Activated naive CD4-positive, alpha-beta T cell treated with anti-CD3 and anti-CD28 coated beads for 36 hours (primary cell): ENCODE measurements at regions of chr21 and their contacts with region 1.

Region 1: DNA sequence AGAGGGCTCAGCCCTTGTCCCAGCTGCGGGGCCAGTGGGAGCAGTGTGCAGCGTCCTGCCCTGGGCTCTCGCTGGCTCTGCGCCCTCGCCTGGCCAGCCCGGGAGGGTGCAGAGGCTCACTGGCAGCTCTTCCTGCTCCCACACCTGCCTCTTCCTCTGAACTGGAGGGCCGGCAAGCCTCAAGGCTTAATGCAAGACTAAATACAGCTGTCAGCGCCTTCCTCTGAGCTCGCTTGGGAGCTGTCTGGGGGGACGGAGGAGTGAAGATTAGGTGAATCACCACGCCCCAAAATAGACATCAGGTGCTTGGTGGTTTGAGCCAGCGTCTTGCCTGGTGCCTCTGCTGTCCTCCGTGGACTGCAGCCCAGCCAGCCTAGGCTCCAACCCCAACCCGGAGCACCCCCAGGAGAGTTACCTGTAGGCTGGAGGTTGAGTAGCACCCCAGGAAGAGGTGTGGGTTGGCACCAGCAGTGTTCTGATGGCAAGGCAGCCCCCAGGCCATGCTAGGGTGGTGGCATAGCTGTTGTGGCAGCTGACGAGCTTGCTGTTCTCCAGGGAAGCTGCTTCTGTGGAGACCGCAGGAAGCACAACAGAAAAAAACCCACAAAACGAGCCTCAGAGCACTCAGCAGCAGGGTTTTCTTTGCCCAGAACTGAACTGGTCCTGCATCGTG is 36.9 kb downstream of the UMODL1 start:
- DNase-seq: peak; percentile 71
- H3K4me3 Mint-ChIP-seq: peak overlapping the region; percentile 20
- H3K27ac Mint-ChIP-seq: no peak overlapping the region
- H3K4me1 Mint-ChIP-seq: peaks cover 5% of the 10 kb centered on the region
- H3K27me3 Mint-ChIP-seq: no peaks in the 10 kb centered on the region

Region 2: DNA sequence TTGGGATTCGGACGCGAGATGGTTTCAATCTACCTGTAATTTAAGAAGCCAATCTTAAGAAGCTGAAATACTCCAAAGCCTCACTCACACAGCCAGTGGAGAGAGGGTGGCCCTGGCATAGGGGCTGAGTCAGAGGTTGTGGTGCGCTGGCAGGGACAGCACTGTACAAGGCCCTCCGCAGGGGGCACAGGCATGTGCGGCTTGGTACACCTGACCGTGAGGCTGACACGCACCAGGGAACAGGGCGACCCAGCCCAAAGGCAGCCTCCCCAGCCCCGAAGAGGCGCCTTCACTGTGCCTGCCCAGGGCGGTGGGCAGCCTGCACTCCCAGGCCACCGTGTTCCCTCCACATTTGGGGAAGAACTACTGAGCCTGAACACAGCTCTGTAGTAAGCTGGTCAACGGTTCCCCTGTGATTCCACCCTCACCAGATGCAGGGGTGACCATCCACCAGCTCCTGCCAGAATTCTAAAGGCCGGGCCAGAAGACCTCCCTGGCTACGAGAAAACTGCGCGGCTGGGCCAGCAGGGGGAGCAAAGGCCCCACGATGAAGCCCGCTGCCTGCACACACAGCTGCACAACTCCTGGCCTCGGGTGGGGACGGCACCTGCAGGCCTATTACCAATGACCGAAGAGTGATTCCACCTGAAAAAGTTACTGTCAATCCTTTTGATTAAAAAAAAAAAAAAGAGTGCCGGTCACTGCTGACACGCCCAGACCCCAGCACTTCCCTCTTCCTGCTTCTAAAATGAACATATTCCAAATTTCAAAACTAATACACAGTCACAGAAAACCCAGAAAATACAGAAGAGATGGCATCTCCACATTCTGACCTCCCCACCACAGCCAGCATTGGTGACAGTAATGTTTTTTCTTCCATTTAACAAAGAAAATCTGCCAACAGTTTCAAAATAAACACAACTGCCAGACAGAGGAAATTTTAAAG is 291.5 kb before region 1 on chr21:
- CTCF ChIA-PET with region 1: interaction called, 30 read pairs
- intact Hi-C with region 1: loop called (anchors 1 kb)
- DNase-seq: peak; percentile 68
- H3K4me3 Mint-ChIP-seq: no peak overlapping the region
- H3K27ac Mint-ChIP-seq: no peak overlapping the region
- H3K4me1 Mint-ChIP-seq: peaks cover 10% of the 10 kb centered on the region
- H3K27me3 Mint-ChIP-seq: no peaks in the 10 kb centered on the region

Region 3: GRCh38 chr21:41895643-41896493 is 212.1 kb before region 1 on chr21:
- CTCF ChIA-PET with region 1: interaction called, 5 read pairs
- intact Hi-C with region 1: loop called (anchors 5 kb)
- DNase-seq: peak; percentile 78
- H3K4me3 Mint-ChIP-seq: no peak overlapping the region
- H3K27ac Mint-ChIP-seq: no peak overlapping the region
- H3K4me1 Mint-ChIP-seq: peaks cover 22% of the 10 kb centered on the region
- H3K27me3 Mint-ChIP-seq: no peaks in the 10 kb centered on the region

Region 4: DNA sequence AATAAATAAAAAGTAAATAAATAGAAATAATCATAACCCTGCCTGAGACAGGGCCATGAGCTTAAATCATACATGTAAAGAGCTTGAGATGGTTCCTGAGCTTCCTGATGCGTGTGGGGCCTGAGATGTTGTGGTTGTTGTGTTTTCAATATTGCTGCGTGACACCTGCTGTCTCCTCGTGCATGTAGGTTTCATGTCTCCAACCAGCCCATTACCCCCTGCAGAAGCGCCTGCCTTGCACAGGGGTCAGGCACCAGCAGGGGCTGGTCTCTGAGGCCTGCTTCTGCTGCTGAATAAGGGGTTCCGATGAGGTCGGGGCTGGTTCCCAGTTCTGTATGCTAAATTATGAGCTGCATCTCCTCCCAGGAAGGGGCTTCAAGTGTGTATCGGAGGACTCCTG is 21.0 kb before region 1 on chr21:
- CTCF ChIA-PET with region 1: interaction called, 43 read pairs
- intact Hi-C with region 1: no loop called
- DNase-seq: no peak
- H3K4me3 Mint-ChIP-seq: no peak overlapping the region
- H3K27ac Mint-ChIP-seq: no peak overlapping the region
- H3K4me1 Mint-ChIP-seq: peaks cover 10% of the 10 kb centered on the region
- H3K27me3 Mint-ChIP-seq: no peaks in the 10 kb centered on the region